ENCODE measurements at regions of chr17 and their contacts with region 1.

Region 1: DNA sequence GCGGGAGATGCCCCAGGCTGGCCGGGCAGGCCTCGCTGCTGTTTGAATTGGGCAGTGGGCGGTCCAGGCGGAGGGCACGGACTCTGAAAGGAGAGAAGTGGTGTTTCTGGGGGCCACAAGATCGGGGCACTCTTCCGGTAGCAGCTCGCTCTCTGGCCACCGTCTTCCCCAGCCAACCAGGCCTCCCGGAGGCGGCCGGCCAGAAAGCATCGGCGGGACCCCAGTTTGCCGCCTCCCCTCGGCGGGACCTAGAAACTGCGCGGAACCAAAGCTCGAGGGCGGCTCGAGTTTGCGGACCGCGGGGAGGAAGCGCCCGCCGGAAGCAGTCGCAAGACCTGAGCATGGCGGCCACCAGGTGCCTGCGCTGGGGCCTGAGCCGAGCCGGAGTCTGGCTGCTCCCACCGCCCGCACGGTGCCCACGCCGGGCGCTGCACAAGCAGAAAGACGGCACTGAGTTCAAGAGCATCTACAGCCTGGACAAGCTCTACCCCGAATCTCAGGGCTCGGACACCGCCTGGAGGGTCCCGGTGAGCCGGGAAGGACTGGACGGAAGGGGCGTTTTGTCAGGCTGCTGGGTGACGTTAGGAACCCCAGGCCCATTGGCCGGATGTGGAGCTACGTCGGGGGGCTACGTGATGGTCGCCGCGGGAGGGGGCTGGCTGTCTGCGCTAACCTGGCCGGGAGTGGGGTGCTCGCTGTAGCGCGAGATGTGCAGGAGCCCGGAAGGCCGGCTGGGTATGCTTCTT is at the start of gene MRPL58:
- DNase-seq: peak; percentile 80 to 93
- H3K4me3 ChIP-seq: peak within 1 kb of the TSS; percentile 73 to 84 (median 79)
- H3K27ac ChIP-seq: peak within 1 kb of the TSS; percentile 87
- H3K4me1 ChIP-seq: peaks cover 0 to 15% (median 4%) of the 10 kb centered on the region in 4 experiments; a peak in 5 of 7 replicates
- H3K27me3 ChIP-seq: no peaks in the 10 kb centered on the region
- CTCF ChIP-seq: peak in 2 of 3 experiments; percentile 36 to 38; a peak in 3 of 4 replicates
- EP300 ChIP-seq: peak in 1 of 2 experiments; percentile 60; a peak in 1 of 3 replicates
- POLR2A ChIP-seq: peak; percentile 84 to 96
- RAD21 ChIP-seq: peak in 1 of 2 experiments; percentile 38; a peak in 3 of 4 replicates
- total RNA-seq, gene MRPL58: 48.5 and 49.1 TPM in 2 replicates

Region 2: GRCh38 chr17:74981979-74982662 is 30.4 kb before region 1 on chr17:
- CTCF ChIA-PET with region 1: interaction called, 74 read pairs
- POLR2A ChIA-PET with region 1: interaction called, 87 read pairs
- DNase-seq: peak in 1 of 2 experiments; percentile 87
- H3K4me3 ChIP-seq: peak overlapping the region; percentile 70 to 90 (median 76)
- H3K27ac ChIP-seq: peak overlapping the region; percentile 55; the same call in 1 of the 2 replicates
- H3K4me1 ChIP-seq: peaks cover 4 to 8% (median 7%) of the 10 kb centered on the region in 4 experiments
- H3K27me3 ChIP-seq: peaks cover 0 to 2% (median 1%) of the 10 kb centered on the region in 4 experiments; a peak in 2 of 7 replicates
- CTCF ChIP-seq: peak in 1 of 3 experiments; percentile 11; a peak in 1 of 4 replicates
- EP300 ChIP-seq: peak in 1 of 2 experiments; percentile 46; a peak in 1 of 3 replicates
- POLR2A ChIP-seq: peak; percentile 94 to 97
- RAD21 ChIP-seq: no peak

Region 3: DNA sequence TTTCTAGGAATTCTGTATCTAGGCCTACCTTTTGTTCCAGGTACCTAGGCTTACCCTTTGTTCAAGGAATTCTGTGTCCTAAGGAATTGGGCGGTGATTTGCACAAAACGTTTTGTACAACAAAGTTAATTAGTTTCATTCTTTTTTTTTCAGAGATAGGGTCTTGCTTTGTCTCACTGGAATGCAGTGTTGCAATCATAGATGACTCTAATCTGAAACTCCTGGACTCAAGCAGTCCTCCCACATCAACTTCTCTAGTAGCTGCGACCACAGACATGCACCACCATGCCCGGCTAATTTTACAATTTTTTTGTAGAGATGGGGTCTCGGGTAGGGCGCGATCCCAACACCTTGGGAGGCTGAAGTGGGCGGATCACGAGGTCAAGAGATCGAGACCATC is 18.0 kb before region 1 on chr17:
- CTCF ChIA-PET with region 1: interaction called, 74 read pairs
- POLR2A ChIA-PET with region 1: interaction called, 87 read pairs
- DNase-seq: no peak
- H3K4me3 ChIP-seq: no peak overlapping the region
- H3K27ac ChIP-seq: no peak overlapping the region
- H3K4me1 ChIP-seq: no peaks in the 10 kb centered on the region
- H3K27me3 ChIP-seq: no peaks in the 10 kb centered on the region
- CTCF ChIP-seq: no peak
- EP300 ChIP-seq: no peak
- POLR2A ChIP-seq: no peak
- RAD21 ChIP-seq: no peak

Region 4: DNA sequence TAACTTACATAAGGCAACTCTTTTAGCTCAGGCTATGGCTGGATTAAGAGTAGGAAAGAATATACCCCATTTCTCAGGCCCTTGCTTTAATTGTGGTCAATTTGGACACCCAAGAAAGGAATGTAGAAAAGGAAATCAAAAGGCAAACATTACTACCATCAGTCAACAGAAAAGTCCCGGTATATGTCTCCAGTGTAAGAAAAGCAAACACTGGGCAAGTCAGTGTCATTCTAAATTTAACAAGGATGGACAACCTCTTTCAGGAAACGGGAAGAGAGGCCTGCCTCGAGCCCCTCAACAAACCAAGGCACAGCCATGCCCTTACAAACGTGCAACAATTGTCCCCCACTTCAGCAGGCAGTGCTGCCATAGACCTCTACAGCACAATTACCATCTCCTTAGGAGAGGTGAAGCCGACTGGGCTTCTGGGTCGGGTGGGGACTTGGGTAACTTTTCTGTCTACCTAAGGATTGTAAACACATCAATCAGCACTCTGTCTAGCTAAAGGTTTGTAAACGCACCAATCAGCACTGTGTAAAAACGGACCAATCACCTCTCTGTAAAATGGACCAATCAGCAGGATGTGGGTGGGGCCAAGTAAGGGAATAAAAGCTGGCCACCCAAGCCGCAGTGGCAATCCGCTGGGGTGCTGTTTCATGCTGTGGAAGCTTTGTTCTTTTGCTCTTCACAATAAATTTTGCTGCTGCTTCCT is 12.3 kb after region 1 on chr17:
- CTCF ChIA-PET with region 1: interaction called, 27 read pairs
- POLR2A ChIA-PET with region 1: interaction called, 48 read pairs
- DNase-seq: no peak
- H3K4me3 ChIP-seq: no peak overlapping the region
- H3K27ac ChIP-seq: no peak overlapping the region
- H3K4me1 ChIP-seq: no peaks in the 10 kb centered on the region
- H3K27me3 ChIP-seq: no peaks in the 10 kb centered on the region
- CTCF ChIP-seq: no peak
- EP300 ChIP-seq: no peak
- POLR2A ChIP-seq: no peak
- RAD21 ChIP-seq: no peak

Region 5: GRCh38 chr17:75046582-75047289 is 34.2 kb after region 1 on chr17 and contains the starts of genes ATP5PD and KCTD2:
- CTCF ChIA-PET with region 1: interaction called, 7 read pairs
- POLR2A ChIA-PET with region 1: interaction called, 20 read pairs
- DNase-seq: peak; percentile 86 to 94
- H3K4me3 ChIP-seq: peak within 1 kb of the TSS; percentile 86 to 98 (median 97)
- H3K27ac ChIP-seq: peak within 1 kb of the TSS; percentile 75; the same call in 1 of the 2 replicates
- H3K4me1 ChIP-seq: peaks cover 4 to 20% (median 4%) of the 10 kb centered on the region in 4 experiments; a peak in 6 of 7 replicates
- H3K27me3 ChIP-seq: no peaks in the 10 kb centered on the region
- CTCF ChIP-seq: no peak
- EP300 ChIP-seq: peak in 1 of 2 experiments; percentile 99; a peak in 2 of 3 replicates
- POLR2A ChIP-seq: peak; percentile 56 to 84
- RAD21 ChIP-seq: no peak
- total RNA-seq, gene ATP5PD: 326 and 335 TPM in 2 replicates
- total RNA-seq, gene KCTD2: 33.7 and 34.1 TPM in 2 replicates